Lower lobe of right lung (tissue), 2 donors: ENCODE measurements at regions of chr1 and their contacts with region 1.

Region 1: DNA sequence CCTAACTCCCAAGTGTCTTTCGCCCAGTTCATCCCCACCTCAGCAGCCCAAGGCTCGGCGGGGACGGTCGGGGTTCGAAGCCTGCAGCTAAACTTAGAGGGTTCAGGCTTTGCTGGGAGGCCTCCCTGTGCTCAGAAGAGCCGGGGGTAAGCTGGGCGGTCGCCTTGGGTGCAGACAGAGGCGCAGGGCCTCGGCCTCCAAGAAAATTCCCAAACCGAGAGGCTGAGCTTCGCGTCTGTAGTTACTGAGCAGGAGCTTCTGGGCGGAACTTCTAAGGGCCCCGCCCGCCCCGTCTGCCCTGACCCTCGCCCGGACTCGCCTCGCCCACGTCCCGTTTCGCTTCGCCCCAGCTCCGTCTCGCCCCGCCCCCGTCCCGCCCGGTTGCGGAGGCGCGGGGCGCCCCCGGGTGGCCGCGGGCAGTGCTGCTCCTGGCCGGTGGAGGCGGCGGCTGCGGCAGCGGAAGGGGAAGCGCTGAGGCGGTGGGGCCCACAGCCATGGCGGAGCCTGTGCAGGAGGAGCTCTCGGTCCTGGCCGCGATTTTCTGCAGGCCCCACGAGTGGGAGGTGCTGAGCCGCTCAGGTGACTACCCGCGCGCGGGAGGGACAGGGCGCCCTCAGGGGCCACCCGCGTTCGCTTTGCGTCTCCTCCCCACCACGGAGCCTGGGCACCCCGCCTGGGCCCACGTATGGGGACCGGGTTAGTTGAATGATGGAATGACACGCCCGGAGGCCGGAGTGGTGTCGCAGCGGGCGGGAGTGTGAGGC is at the start of gene RWDD3:
- DNase-seq: peak; percentile 97
- ATAC-seq: peak; percentile 98 to 99
- H3K4me3 ChIP-seq: peak within 1 kb of the TSS; percentile 78
- H3K27ac ChIP-seq: peak within 1 kb of the TSS; percentile 86
- H3K4me1 ChIP-seq: peaks cover 32% of the 10 kb centered on the region
- H3K27me3 ChIP-seq: no peaks in the 10 kb centered on the region
- CTCF ChIP-seq: peak; percentile 92
- total RNA-seq, gene RWDD3: 11.8 TPM

Region 2: GRCh38 chr1:95084317-95085176 is 149.4 kb before region 1 on chr1:
- intact Hi-C with region 1: loop called (anchors 10 kb)
- DNase-seq: no peak
- ATAC-seq: peak; percentile 72 to 84
- H3K4me3 ChIP-seq: no peak overlapping the region
- H3K27ac ChIP-seq: no peak overlapping the region
- H3K4me1 ChIP-seq: peaks cover 6% of the 10 kb centered on the region
- H3K27me3 ChIP-seq: no peaks in the 10 kb centered on the region
- CTCF ChIP-seq: peak; percentile 66

Region 3: DNA sequence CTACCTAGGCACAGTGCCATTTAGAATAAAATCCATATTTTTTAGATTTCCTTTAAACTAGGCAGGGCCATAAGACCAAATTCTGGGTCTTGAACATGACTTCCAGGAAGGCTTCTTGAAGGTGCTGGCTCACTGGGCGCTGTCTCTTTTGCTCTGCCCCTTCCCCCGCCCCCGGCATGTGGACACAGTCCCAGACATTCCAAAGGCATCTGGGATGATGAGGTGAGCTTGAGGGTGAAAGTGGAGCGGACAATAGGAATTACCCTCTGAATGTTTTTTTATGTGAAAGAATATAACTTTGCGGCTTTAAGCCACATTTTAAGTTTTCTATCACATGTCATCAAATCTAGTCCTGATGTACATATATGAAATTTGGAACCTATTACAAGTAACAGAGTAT is 29.5 kb after region 1 on chr1:
- intact Hi-C with region 1: no loop called
- DNase-seq: no peak
- ATAC-seq: no peak
- H3K4me3 ChIP-seq: no peak overlapping the region
- H3K27ac ChIP-seq: no peak overlapping the region
- H3K4me1 ChIP-seq: no peaks in the 10 kb centered on the region
- H3K27me3 ChIP-seq: no peaks in the 10 kb centered on the region
- CTCF ChIP-seq: no peak